ENCODE measurements at regions of chr1 and their contacts with region 1.

Region 1: DNA sequence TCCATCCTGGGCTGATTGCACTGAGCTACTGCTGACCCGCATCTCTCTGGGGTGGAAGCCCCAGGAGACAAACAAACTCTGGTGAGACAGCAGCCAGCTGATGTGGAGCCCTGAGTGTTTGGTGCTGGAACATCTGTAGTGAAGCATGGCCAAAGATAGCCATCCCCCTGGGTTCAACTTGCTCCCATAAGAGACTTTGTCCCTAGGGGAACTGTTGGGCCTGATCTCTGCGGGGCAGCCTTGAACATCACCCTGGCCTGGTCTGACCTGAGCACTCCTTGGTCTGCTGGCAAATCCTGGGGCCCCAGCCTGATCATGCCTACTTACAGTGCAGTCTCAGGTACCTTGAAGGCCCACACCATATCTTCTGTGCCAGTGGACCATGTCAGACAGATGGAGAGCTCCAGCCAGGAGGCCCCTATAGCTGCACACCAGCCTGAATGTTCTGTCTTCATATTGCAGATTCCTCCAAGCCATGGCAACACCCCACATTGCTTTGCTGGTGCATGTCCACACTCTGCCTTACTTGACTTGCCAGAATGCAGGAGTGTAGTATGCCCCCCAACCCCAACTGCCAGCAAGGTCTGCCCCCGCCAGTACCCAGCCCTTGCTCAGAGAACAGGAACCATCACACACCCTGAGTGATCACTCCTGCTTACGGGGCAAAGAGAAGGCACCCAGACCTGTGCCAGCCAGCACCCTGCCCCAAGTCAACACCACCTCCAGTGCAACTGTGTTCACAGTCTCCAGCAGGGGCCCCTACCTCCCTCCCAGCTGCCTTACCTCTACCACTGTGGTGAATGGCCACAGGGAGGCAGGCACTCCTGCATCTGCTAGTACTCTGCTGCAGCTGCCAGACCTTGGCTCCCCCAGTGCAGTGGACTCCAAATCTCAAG is 690.5 kb upstream of the NR5A2 start:
- DNase-seq: peak; percentile 13 to 46
- H3K4me3 ChIP-seq: no peak overlapping the region
- H3K27ac ChIP-seq: no peak overlapping the region
- H3K4me1 ChIP-seq: no peaks in the 10 kb centered on the region
- H3K27me3 ChIP-seq: no peaks in the 10 kb centered on the region
- CTCF ChIP-seq: peak; percentile 58 to 96 (median 65)
- EP300 ChIP-seq: no peak
- POLR2A ChIP-seq: no peak
- RAD21 ChIP-seq: peak; percentile 53 to 66

Region 2: GRCh38 chr1:199272643-199273086 is 64.3 kb before region 1 on chr1:
- CTCF ChIA-PET with region 1: no interaction called
- POLR2A ChIA-PET with region 1: no interaction called
- DNase-seq: peak in 1 of 2 experiments; percentile 13
- H3K4me3 ChIP-seq: no peak overlapping the region
- H3K27ac ChIP-seq: no peak overlapping the region
- H3K4me1 ChIP-seq: peaks cover 2 to 4% (median 3%) of the 10 kb centered on the region in 4 experiments; a peak in 3 of 7 replicates
- H3K27me3 ChIP-seq: no peaks in the 10 kb centered on the region
- CTCF ChIP-seq: no peak
- EP300 ChIP-seq: 0 out of 3 replicates have a peak, but pooled peaks of 1 of the 2 experiments have one; percentile 5
- POLR2A ChIP-seq: no peak
- RAD21 ChIP-seq: no peak

Region 3: DNA sequence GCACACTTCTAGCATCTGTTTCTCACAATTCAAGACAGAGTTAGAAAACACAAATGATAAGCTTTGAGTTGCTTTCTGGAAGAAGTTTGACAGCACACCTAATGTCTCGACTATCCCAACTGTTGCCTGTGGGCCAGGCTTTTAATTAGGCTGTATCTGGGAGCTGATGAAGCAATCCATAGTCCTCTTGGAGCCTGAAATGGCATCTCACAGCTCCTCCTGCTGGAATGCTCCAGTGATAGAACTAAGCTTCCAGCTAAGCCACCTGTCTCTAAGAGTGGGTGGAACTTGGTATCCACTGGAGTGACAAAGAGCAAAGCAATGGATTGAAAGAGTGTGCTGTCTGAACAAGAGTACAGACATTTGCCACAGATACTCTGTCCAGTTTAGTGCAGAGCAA is 85.2 kb after region 1 on chr1:
- CTCF ChIA-PET with region 1: interaction called, 12 read pairs
- POLR2A ChIA-PET with region 1: no interaction called
- DNase-seq: peak; percentile 17 to 45
- H3K4me3 ChIP-seq: no peak overlapping the region
- H3K27ac ChIP-seq: no peak overlapping the region
- H3K4me1 ChIP-seq: no peaks in the 10 kb centered on the region
- H3K27me3 ChIP-seq: no peaks in the 10 kb centered on the region
- CTCF ChIP-seq: peak; percentile 13 to 72 (median 60)
- EP300 ChIP-seq: no peak
- POLR2A ChIP-seq: no peak
- RAD21 ChIP-seq: peak; percentile 80 to 90

Region 4: GRCh38 chr1:199472025-199472424 is 135.0 kb after region 1 on chr1:
- CTCF ChIA-PET with region 1: no interaction called
- POLR2A ChIA-PET with region 1: no interaction called
- DNase-seq: no peak
- H3K4me3 ChIP-seq: no peak overlapping the region
- H3K27ac ChIP-seq: no peak overlapping the region
- H3K4me1 ChIP-seq: no peaks in the 10 kb centered on the region
- H3K27me3 ChIP-seq: no peaks in the 10 kb centered on the region
- CTCF ChIP-seq: no peak
- EP300 ChIP-seq: no peak
- POLR2A ChIP-seq: no peak
- RAD21 ChIP-seq: no peak

Region 5: GRCh38 chr1:199522936-199523335 is 185.9 kb after region 1 on chr1:
- CTCF ChIA-PET with region 1: no interaction called
- POLR2A ChIA-PET with region 1: no interaction called
- DNase-seq: no peak
- H3K4me3 ChIP-seq: no peak overlapping the region
- H3K27ac ChIP-seq: no peak overlapping the region
- H3K4me1 ChIP-seq: no peaks in the 10 kb centered on the region
- H3K27me3 ChIP-seq: no peaks in the 10 kb centered on the region
- CTCF ChIP-seq: no peak
- EP300 ChIP-seq: no peak
- POLR2A ChIP-seq: no peak
- RAD21 ChIP-seq: no peak